ENCODE measurements at regions of chr2 and their contacts with region 1.

Region 1: GRCh38 chr2:231161877-231162329 is 36.5 kb upstream of the ARMC9 start:
- DNase-seq: peak; percentile 92
- H3K4me3 ChIP-seq: no peak overlapping the region
- H3K27ac ChIP-seq: peak overlapping the region; percentile 86
- H3K4me1 ChIP-seq: peaks cover 38% of the 10 kb centered on the region
- H3K27me3 ChIP-seq: no peaks in the 10 kb centered on the region
- CTCF ChIP-seq: no peak
- POLR2A ChIP-seq: peak; percentile 42

Region 2: GRCh38 chr2:230751062-230751461 is 410.8 kb before region 1 on chr2:
- CTCF ChIA-PET with region 1: no interaction called
- POLR2A ChIA-PET with region 1: no interaction called
- dilution Hi-C with region 1: no loop called
- intact Hi-C with region 1: no loop called
- DNase-seq: peak; percentile 24
- H3K4me3 ChIP-seq: no peak overlapping the region
- H3K27ac ChIP-seq: no peak overlapping the region
- H3K4me1 ChIP-seq: no peaks in the 10 kb centered on the region
- H3K27me3 ChIP-seq: no peaks in the 10 kb centered on the region
- CTCF ChIP-seq: no peak
- POLR2A ChIP-seq: no peak

Region 3: GRCh38 chr2:231047274-231047922 is 114.5 kb before region 1 on chr2:
- CTCF ChIA-PET with region 1: no interaction called
- POLR2A ChIA-PET with region 1: no interaction called
- dilution Hi-C with region 1: no loop called
- intact Hi-C with region 1: no loop called
- DNase-seq: no peak
- H3K4me3 ChIP-seq: no peak overlapping the region
- H3K27ac ChIP-seq: no peak overlapping the region
- H3K4me1 ChIP-seq: peaks cover under 1% of the 10 kb centered on the region
- H3K27me3 ChIP-seq: peaks cover 9 to 11% of the 10 kb centered on the region in 2 experiments
- CTCF ChIP-seq: no peak
- POLR2A ChIP-seq: no peak

Region 4: DNA sequence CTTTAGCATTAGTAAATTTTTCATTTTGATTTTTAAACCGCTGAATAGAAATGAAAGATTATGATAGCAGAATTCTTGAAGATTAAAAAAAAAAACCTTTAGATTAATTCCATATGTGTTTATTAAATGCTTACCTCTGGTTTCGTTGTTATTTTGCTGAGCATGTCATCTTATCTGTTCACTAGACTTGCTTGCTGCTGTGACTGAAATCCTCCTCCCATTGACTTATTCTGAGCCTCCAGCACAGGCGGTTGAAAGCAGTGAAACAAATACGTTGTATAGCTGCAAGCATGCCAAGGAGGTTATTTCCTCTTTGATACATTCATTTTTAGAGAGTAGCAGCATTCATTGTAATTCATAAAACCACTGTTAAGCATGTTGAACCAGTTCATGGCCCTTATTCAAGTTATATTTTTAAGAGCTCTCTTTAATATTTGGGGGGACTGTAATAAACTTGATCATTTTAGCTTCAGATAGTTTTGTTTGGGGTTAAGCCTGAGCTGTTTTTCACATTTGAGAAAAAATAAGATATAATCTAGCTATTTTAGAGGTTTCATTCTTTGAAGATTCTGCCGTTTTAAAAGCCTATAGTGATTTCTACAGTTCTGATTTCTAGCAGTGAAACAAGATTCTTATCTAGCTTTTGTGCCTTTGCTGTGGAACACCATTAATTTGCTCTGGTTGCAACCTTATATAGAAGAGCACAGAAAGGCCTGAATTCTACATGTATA is 36.9 kb before region 1 on chr2 and contains the start of gene HTR2B:
- CTCF ChIA-PET with region 1: interaction called, 5 read pairs
- POLR2A ChIA-PET with region 1: no interaction called
- dilution Hi-C with region 1: no loop called
- intact Hi-C with region 1: loop called (anchors 2 kb)
- DNase-seq: peak; percentile 69
- H3K4me3 ChIP-seq: peak within 1 kb of the TSS in 1 of 3 experiments; percentile 65
- H3K27ac ChIP-seq: peak within 1 kb of the TSS; percentile 23
- H3K4me1 ChIP-seq: peaks cover 38% of the 10 kb centered on the region
- H3K27me3 ChIP-seq: no peaks in the 10 kb centered on the region
- CTCF ChIP-seq: no peak
- POLR2A ChIP-seq: no peak
- total RNA-seq, gene HTR2B: 0.55 and 0.93 TPM in 2 replicates

Region 5: DNA sequence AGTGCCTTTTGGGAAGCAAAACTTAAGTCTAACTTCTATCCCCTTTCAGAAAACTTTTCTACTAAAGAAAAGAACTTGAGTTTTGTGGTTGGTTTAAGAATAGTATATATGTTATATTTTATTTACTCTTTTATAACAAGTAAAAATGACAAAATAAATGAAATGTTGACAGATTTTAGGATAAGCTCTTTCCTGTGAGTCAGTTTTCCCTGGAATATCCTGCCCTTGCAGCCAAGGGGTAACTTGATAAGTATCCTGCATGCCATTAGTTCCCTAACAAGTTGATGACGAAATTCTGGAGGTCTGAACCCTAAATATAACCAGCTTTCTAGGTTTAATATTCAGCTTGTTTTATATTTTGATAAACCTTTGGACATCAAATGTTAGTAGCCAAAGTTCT is 29.8 kb before region 1 on chr2:
- CTCF ChIA-PET with region 1: interaction called, 4 read pairs
- POLR2A ChIA-PET with region 1: no interaction called
- dilution Hi-C with region 1: no loop called
- intact Hi-C with region 1: loop called (anchors 1 kb)
- DNase-seq: peak; percentile 84
- H3K4me3 ChIP-seq: peak overlapping the region in 1 of 3 experiments; percentile 6
- H3K27ac ChIP-seq: peak overlapping the region; percentile 65
- H3K4me1 ChIP-seq: peaks cover 33% of the 10 kb centered on the region
- H3K27me3 ChIP-seq: no peaks in the 10 kb centered on the region
- CTCF ChIP-seq: no peak
- POLR2A ChIP-seq: no peak

Region 6: DNA sequence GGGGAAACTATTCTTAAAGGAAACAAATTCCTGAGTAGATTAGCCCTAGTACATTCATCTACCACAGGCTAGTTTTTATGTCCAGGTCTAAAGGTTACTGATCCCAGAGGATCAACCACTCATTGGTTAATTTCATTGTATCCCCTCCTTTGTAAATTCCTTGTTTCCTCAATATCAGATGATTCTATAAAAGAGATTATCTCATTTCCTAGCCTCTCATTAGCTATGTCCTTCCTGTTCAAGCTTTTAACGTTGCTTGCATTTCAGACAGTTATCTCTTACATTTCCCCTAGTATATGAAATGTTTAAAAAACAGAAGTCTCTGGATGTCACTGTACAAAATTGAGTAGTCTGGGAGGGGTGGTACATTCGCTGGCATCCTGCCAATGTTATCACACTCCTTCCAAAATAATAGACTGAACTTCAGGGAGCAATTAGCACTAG is 12.3 kb after region 1 on chr2:
- CTCF ChIA-PET with region 1: interaction called, 10 read pairs
- POLR2A ChIA-PET with region 1: interaction called, 3 read pairs
- dilution Hi-C with region 1: no loop called
- intact Hi-C with region 1: no loop called
- DNase-seq: peak; percentile 53
- H3K4me3 ChIP-seq: no peak overlapping the region
- H3K27ac ChIP-seq: peak overlapping the region; percentile 50
- H3K4me1 ChIP-seq: peaks cover 28% of the 10 kb centered on the region
- H3K27me3 ChIP-seq: no peaks in the 10 kb centered on the region
- CTCF ChIP-seq: no peak
- POLR2A ChIP-seq: no peak

Region 7: GRCh38 chr2:231181860-231182512 is 20.1 kb after region 1 on chr2:
- CTCF ChIA-PET with region 1: interaction called, 7 read pairs
- POLR2A ChIA-PET with region 1: no interaction called
- dilution Hi-C with region 1: no loop called
- intact Hi-C with region 1: loop called (anchors 1 kb)
- DNase-seq: peak; percentile 91
- H3K4me3 ChIP-seq: no peak overlapping the region
- H3K27ac ChIP-seq: peak overlapping the region; percentile 75
- H3K4me1 ChIP-seq: peaks cover 48% of the 10 kb centered on the region
- H3K27me3 ChIP-seq: no peaks in the 10 kb centered on the region
- CTCF ChIP-seq: no peak
- POLR2A ChIP-seq: no peak

Region 8: DNA sequence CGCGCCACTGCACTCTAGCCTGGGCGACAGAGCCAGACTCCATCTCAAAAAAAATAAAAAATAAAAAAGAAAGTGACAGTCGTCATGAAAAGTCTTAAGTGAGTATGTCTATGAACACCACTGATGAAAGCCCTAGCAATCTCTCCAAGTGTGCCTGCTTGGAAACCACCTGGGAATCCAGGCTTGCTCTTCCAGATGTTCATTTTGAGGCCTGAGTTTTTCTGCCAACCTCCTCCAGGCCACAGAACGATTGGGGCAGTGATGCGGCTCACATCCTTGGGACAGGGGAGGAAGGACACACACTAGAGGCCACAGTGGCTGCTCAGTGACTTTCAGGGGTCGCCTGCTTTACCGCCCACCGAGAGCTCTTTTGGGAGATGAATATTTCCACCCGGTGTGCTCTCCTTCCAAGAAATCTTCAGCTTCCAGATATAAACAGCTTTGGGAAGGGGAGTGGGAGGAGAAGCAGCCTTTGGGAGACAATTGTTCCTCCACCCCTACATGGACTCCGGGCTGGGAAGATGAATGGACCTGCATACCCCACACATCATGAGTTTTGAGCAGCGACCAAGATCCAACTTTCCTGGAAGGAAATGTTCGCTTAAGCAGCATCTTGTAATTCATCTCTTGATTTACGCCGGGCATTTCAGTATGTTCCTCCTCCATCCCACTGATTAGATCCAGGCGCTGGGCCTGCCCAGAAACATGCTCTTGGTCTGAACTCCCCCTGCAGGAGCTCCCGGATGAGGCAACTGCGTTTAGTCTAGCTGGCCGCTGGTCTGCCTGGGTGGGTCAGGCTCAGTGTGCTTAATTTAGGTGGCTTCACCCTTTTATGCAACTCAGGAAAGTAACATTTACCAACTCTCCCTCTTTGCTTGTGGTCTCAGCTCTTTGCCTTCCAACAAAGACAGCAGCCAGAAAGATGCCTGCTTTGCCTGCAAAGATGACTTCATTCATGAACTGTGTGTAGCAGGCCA is 30.3 kb after region 1 on chr2:
- CTCF ChIA-PET with region 1: interaction called, 20 read pairs
- POLR2A ChIA-PET with region 1: no interaction called
- dilution Hi-C with region 1: no loop called
- intact Hi-C with region 1: loop called (anchors 2 kb)
- DNase-seq: peak; percentile 77
- H3K4me3 ChIP-seq: no peak overlapping the region
- H3K27ac ChIP-seq: peak overlapping the region; percentile 47
- H3K4me1 ChIP-seq: peaks cover 24% of the 10 kb centered on the region
- H3K27me3 ChIP-seq: no peaks in the 10 kb centered on the region
- CTCF ChIP-seq: peak; percentile 79 to 88
- POLR2A ChIP-seq: no peak

Region 9: DNA sequence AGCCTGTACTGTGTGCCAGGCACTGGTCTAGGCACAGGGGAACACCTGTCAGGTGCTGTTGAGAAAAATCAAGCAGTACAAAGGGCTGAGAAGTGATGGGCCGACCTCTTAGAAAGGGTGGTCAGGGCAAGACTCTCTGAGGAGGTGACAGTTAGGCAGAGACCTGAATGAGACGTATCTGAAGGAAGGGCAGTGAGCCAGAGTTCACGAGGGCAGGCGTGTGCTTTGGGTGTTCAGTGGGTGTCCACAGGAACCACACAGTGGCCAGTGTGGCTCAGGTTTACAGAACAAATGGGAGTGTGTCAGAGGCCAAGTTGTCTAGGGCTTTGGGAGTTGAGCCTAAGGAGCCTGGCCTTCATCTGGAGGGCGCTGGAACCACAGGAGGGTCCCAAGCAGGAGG is 42.7 kb after region 1 on chr2:
- CTCF ChIA-PET with region 1: no interaction called
- POLR2A ChIA-PET with region 1: no interaction called
- dilution Hi-C with region 1: no loop called
- intact Hi-C with region 1: no loop called
- DNase-seq: no peak
- H3K4me3 ChIP-seq: no peak overlapping the region
- H3K27ac ChIP-seq: no peak overlapping the region
- H3K4me1 ChIP-seq: no peaks in the 10 kb centered on the region
- H3K27me3 ChIP-seq: no peaks in the 10 kb centered on the region
- CTCF ChIP-seq: no peak
- POLR2A ChIP-seq: no peak

Region 10: GRCh38 chr2:231463698-231464575 is 302.0 kb after region 1 on chr2 and contains the start of gene NCL:
- CTCF ChIA-PET with region 1: no interaction called
- POLR2A ChIA-PET with region 1: no interaction called
- dilution Hi-C with region 1: no loop called
- intact Hi-C with region 1: no loop called
- DNase-seq: peak; percentile 99
- H3K4me3 ChIP-seq: peak within 1 kb of the TSS; percentile 93 to 99 (median 96)
- H3K27ac ChIP-seq: peak within 1 kb of the TSS; percentile 79
- H3K4me1 ChIP-seq: peaks cover 20% of the 10 kb centered on the region
- H3K27me3 ChIP-seq: no peaks in the 10 kb centered on the region
- CTCF ChIP-seq: no peak
- POLR2A ChIP-seq: peak; percentile 99
- total RNA-seq, gene NCL: 701 and 708 TPM in 2 replicates

Measured in endothelial cell of umbilical vein (primary cell).